T-cell (primary cell): ENCODE measurements at regions of chr2 and their contacts with region 1.

Region 1: DNA sequence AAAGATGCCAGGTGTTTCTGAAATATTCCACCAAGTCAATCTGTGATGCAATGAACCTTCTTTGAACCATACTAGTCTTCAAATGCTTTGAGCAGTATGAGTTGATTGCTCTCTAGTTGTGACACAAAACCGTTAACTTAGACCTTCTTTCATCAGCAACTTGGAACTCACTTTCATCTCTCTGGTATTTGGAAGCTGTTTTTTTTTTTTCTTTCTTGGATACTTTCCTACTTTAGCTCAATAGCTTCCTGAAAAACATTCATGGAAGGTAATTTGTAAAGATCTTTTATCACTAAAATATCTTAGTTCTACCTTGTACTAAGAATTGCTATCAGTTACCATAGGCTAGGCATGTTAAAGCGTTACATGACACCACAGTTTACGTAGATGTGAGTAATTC is 1071.9 kb upstream of the CHAC2 start:
- DNase-seq: no peak
- ATAC-seq: no peak
- H3K4me3 ChIP-seq: no peak overlapping the region
- H3K4me3 Mint-ChIP-seq: no peak overlapping the region
- H3K27ac ChIP-seq: no peak overlapping the region
- H3K27ac Mint-ChIP-seq: no peak overlapping the region
- H3K4me1 ChIP-seq: no peaks in the 10 kb centered on the region
- H3K4me1 Mint-ChIP-seq: no peaks in the 10 kb centered on the region
- H3K27me3 ChIP-seq: no peaks in the 10 kb centered on the region
- H3K27me3 Mint-ChIP-seq: no peaks in the 10 kb centered on the region

Region 2: GRCh38 chr2:51953931-51954330 is 741.8 kb before region 1 on chr2:
- CTCF ChIA-PET with region 1: interaction called in 1 of 2 experiments, 10 read pairs
- POLR2A ChIA-PET with region 1: no interaction called
- DNase-seq: no peak
- ATAC-seq: no peak
- H3K4me3 ChIP-seq: no peak overlapping the region
- H3K4me3 Mint-ChIP-seq: no peak overlapping the region
- H3K27ac ChIP-seq: no peak overlapping the region
- H3K27ac Mint-ChIP-seq: no peak overlapping the region
- H3K4me1 ChIP-seq: no peaks in the 10 kb centered on the region
- H3K4me1 Mint-ChIP-seq: no peaks in the 10 kb centered on the region
- H3K27me3 ChIP-seq: no peaks in the 10 kb centered on the region
- H3K27me3 Mint-ChIP-seq: no peaks in the 10 kb centered on the region

Region 3: DNA sequence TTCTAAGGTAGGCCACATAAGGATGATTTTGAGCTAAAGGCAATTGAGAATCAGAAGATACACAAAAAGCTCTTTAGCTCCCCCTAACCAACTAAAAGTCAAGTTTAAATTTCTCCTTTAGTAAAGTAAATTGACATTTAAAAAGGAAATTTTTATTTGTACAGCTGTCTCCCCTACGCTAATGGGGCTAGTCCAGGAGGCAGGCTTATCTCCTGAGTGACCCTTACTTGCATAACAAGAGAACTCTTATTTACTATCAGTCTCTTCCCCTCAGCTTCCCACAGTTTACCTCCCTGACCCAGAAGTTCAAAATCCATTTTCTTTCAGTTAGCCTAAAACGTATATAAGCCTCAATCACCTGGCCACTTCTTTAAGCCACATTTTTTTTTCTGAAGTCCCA is 661.0 kb before region 1 on chr2:
- CTCF ChIA-PET with region 1: no interaction called
- POLR2A ChIA-PET with region 1: no interaction called
- DNase-seq: no peak
- ATAC-seq: no peak
- H3K4me3 ChIP-seq: no peak overlapping the region
- H3K4me3 Mint-ChIP-seq: no peak overlapping the region
- H3K27ac ChIP-seq: no peak overlapping the region
- H3K27ac Mint-ChIP-seq: no peak overlapping the region
- H3K4me1 ChIP-seq: no peaks in the 10 kb centered on the region
- H3K4me1 Mint-ChIP-seq: no peaks in the 10 kb centered on the region
- H3K27me3 ChIP-seq: no peaks in the 10 kb centered on the region
- H3K27me3 Mint-ChIP-seq: no peaks in the 10 kb centered on the region

Region 4: DNA sequence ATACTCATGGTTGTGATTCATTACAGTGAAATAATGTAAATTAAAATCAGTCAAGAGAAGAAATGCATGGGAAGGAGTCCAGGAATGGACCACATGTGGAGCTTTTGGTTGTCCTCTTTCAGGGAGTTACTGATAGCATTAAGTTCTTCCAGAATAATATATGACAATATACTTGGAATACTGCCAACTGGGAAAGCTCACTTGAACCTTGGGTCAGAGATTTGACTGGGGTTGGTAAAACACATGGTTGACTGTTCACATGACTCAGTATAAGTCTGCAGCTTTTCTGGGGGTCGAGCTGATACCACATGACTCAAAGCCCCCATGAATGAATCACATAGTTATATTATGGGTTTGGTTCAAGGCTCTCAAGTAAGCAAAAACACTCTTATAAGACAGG is 37.1 kb before region 1 on chr2:
- CTCF ChIA-PET with region 1: no interaction called
- POLR2A ChIA-PET with region 1: no interaction called
- DNase-seq: no peak
- ATAC-seq: no peak
- H3K4me3 ChIP-seq: no peak overlapping the region
- H3K4me3 Mint-ChIP-seq: no peak overlapping the region
- H3K27ac ChIP-seq: no peak overlapping the region
- H3K27ac Mint-ChIP-seq: no peak overlapping the region
- H3K4me1 ChIP-seq: no peaks in the 10 kb centered on the region
- H3K4me1 Mint-ChIP-seq: no peaks in the 10 kb centered on the region
- H3K27me3 ChIP-seq: no peaks in the 10 kb centered on the region
- H3K27me3 Mint-ChIP-seq: no peaks in the 10 kb centered on the region

Region 5: GRCh38 chr2:52710810-52711618 is 15.3 kb after region 1 on chr2:
- CTCF ChIA-PET with region 1: no interaction called
- POLR2A ChIA-PET with region 1: no interaction called
- DNase-seq: no peak
- ATAC-seq: no peak
- H3K4me3 ChIP-seq: no peak overlapping the region
- H3K4me3 Mint-ChIP-seq: no peak overlapping the region
- H3K27ac ChIP-seq: no peak overlapping the region
- H3K27ac Mint-ChIP-seq: no peak overlapping the region
- H3K4me1 ChIP-seq: no peaks in the 10 kb centered on the region
- H3K4me1 Mint-ChIP-seq: no peaks in the 10 kb centered on the region
- H3K27me3 ChIP-seq: no peaks in the 10 kb centered on the region
- H3K27me3 Mint-ChIP-seq: no peaks in the 10 kb centered on the region